Right ventricle myocardium superior (tissue), 1 donor: ENCODE measurements at regions of chr6 and their contacts with region 1.

Region 1: DNA sequence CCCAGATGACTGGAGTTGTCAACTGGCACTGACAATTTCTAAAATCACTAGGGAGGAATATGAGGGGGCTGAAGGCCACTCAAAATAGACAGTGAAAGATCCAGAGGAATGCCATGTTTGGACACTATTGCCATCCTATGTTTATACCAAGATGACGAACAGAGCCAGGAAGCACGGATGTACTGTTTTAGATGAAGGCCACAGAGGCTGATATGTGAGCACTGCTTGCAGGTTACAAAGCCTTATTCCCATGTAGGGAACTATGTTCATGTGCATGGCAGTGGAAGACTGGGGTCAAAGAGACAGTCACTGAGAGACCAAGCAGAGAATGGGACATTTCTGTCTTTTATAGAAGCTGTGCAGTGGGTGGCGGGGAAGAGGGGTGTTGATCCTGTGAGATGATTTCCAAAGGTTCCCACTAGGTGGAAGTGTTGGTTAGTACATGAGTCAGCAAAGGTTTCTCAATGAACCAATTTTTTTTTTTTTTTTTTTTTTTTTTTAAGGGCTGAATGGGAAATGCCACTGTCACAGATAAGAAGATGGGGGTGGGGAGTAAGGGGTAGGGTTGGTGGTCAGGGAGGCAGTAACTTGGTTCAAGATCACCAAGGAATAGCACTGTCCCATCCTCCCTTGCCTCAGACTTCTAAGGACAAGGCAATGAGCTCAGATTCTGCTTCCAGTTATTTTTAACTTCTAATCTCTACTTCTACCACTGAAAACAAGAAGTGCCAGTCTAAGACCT is 46.7 kb upstream of the MOCS1 start:
- DNase-seq: no peak
- ATAC-seq: peak; percentile 87

Region 2: GRCh38 chr6:40308533-40309306 is 327.7 kb after region 1 on chr6:
- intact Hi-C with region 1: loop called (anchors 5 kb)
- DNase-seq: no peak
- ATAC-seq: peak; percentile 60

Region 3: GRCh38 chr6:40845553-40845952 is 864.5 kb after region 1 on chr6:
- intact Hi-C with region 1: loop called (anchors 10 kb)
- DNase-seq: peak; percentile 41
- ATAC-seq: no peak